Prostate gland (tissue), 2 donors: ENCODE measurements at regions of chr14 and their contacts with region 1.

Region 1: DNA sequence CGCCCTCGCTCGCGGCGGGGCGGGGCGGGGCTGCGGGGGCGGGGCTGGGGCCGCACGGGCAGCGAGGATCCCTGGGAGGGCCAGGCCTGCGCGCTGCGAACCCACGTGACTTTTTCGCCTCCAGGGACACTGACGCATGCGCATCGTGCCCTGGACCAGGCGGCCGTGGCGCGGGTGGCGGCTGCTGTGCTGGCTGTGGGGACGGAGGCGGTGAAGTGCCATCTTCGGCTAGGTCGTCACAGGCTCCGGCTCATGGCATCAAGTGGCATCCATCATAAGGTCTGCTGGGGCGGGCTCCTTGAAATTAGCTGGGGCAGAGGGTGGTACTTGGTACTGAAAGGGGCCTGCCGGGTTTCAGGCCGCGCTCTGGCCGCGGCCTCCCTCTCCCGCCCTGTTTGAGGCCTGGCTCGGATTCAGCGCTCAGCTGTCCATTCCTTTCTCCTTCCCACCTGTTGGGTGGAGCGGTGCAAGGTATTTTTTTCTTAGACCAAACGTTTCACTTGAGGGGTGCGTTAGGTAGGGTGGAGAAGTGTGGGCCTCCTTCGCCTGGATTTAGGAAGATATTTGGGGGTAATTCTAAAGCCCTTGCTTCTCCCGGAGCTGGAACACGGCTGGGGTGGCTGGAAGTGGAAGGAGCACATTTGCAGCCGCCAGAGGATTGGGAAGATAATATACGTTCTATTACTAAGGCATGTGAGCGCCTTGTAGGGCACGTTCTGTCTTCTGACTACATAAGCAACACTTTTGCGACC is at the start of gene PRPF39:
- DNase-seq: peak; percentile 93
- H3K4me3 ChIP-seq: peak within 1 kb of the TSS; percentile 55 to 71
- H3K27ac ChIP-seq: peak within 1 kb of the TSS; percentile 82 to 87
- H3K4me1 ChIP-seq: peaks cover 6% of the 10 kb centered on the region
- H3K27me3 ChIP-seq: no peaks in the 10 kb centered on the region
- CTCF ChIP-seq: peak in 2 of 4 experiments; percentile 2
- POLR2A ChIP-seq: peak; percentile 89
- total RNA-seq, gene PRPF39: 30.3 to 47.1 TPM

Region 2: GRCh38 chr14:44897045-44897844 is 186.9 kb before region 1 on chr14:
- intact Hi-C with region 1: loop called (anchors 5 kb)
- DNase-seq: peak; percentile 99
- H3K4me3 ChIP-seq: peak overlapping the region; percentile 91
- H3K27ac ChIP-seq: peak overlapping the region; percentile 99 to 100
- H3K4me1 ChIP-seq: no peaks in the 10 kb centered on the region
- H3K27me3 ChIP-seq: no peaks in the 10 kb centered on the region
- CTCF ChIP-seq: no peak
- POLR2A ChIP-seq: peak; percentile 61